ENCODE measurements at regions of chr17 and their contacts with region 1.

Region 1: GRCh38 chr17:35808962-35809854 is at the start of gene TAF15:
- DNase-seq: peak; percentile 87 to 98 (median 93)
- ATAC-seq: peak; percentile 89
- H3K4me3 ChIP-seq: peak within 1 kb of the TSS; percentile 94
- H3K4me3 Mint-ChIP-seq: peak within 1 kb of the TSS; percentile 91
- H3K27ac ChIP-seq: peak within 1 kb of the TSS; percentile 81 to 91
- H3K27ac Mint-ChIP-seq: peak within 1 kb of the TSS; percentile 91
- H3K4me1 ChIP-seq: peaks cover 39% of the 10 kb centered on the region
- H3K4me1 Mint-ChIP-seq: peaks cover 63% of the 10 kb centered on the region
- H3K27me3 ChIP-seq: no peaks in the 10 kb centered on the region
- H3K27me3 Mint-ChIP-seq: no peaks in the 10 kb centered on the region
- CTCF ChIP-seq: peak; percentile 89
- total RNA-seq, gene TAF15: 114 to 119 TPM

Region 2: DNA sequence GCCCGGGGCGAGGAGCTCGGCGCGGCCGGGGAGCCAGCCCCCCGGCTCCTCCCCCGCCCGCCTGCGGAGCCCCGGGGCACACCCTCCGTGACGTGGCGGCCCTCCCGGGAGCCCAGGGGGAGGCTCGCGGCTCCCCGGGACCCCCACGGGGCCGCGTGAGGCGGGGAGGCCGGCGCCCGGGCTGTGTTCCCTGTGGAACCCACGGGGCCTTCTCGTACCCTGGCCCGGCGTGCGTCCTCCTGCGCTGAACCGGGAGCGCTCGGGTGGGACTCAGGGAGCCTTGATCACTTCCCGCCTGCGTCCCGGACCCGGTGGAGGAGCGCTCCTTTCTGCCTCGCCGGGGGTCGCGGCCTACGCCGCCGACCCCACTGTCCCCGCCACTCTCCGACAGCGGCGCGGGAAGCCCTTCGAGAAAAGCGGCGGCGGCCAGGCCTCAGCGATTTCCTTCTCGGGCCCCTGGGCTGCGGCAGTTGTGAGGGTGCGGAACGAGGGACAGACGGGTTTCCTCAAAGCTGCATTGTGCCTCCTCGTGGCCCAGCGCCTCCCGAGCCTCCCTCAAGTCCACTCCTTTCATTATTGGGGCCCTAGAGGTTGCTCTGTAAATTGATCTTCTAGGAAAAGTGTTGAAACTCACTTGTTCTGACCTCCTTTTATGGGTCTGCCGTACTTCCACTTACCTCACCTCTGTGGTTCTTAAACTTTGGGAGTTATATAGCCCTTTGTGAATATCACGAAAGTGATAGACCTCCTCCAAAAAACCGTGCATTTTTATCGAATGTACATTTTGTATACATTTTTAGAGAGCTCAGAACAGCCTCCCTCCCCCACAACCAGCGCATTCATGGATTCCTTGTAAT is 828.3 kb before region 1 on chr17:
- CTCF ChIA-PET with region 1: no interaction called
- POLR2A ChIA-PET with region 1: interaction called, 3 read pairs
- intact Hi-C with region 1: loop called in 1 of 2 experiments (anchors 5 kb)
- DNase-seq: peak; percentile 38 to 91 (median 66)
- ATAC-seq: peak; percentile 80
- H3K4me3 ChIP-seq: peak overlapping the region; percentile 90
- H3K4me3 Mint-ChIP-seq: peak overlapping the region; percentile 94
- H3K27ac ChIP-seq: peak overlapping the region; percentile 92 to 97
- H3K27ac Mint-ChIP-seq: peak overlapping the region; percentile 88
- H3K4me1 ChIP-seq: peaks cover 26% of the 10 kb centered on the region
- H3K4me1 Mint-ChIP-seq: peaks cover 56% of the 10 kb centered on the region
- H3K27me3 ChIP-seq: no peaks in the 10 kb centered on the region
- H3K27me3 Mint-ChIP-seq: no peaks in the 10 kb centered on the region
- CTCF ChIP-seq: peak; percentile 56

Region 3: GRCh38 chr17:35578197-35578928 is 230.8 kb before region 1 on chr17 and contains the start of gene PEX12:
- CTCF ChIA-PET with region 1: no interaction called
- POLR2A ChIA-PET with region 1: interaction called, 25 read pairs
- intact Hi-C with region 1: no loop called
- DNase-seq: peak; percentile 77 to 96 (median 86)
- ATAC-seq: peak; percentile 96
- H3K4me3 ChIP-seq: peak within 1 kb of the TSS; percentile 85
- H3K4me3 Mint-ChIP-seq: peak within 1 kb of the TSS; percentile 92
- H3K27ac ChIP-seq: peak within 1 kb of the TSS; percentile 90 to 93
- H3K27ac Mint-ChIP-seq: peak within 1 kb of the TSS; percentile 97
- H3K4me1 ChIP-seq: peaks cover 21% of the 10 kb centered on the region
- H3K4me1 Mint-ChIP-seq: peaks cover 42% of the 10 kb centered on the region
- H3K27me3 ChIP-seq: no peaks in the 10 kb centered on the region
- H3K27me3 Mint-ChIP-seq: no peaks in the 10 kb centered on the region
- CTCF ChIP-seq: no peak
- total RNA-seq, gene PEX12: 3.0 to 3.2 TPM

Region 4: DNA sequence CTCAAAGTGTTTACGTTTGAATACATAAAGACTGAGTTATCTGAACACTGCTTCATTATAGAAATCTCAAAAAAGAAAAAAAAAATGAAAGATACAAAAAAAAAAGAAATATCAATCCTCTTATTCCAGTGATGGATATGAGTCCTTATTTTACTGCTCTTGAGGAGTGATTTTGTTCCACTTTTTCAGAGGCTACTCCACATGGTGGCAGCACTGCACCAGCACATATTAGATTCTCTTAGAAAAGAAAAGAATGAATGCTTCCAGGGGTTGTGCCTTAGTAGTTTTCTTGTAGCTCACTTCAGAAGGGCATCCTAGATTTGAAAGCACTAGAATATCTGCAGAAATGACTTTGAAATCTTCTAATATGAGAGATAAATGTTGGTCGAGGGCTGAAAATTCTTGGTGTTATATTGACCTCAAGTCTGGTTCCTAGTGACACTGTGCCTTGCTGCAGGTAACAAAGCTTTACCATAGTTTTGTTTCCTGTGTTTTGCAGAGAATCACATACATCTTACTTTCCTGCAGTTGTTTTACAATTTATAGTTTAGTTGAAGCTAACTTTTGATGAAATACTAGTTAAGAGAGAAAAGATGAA is 196.2 kb before region 1 on chr17:
- CTCF ChIA-PET with region 1: interaction called, 5 read pairs
- POLR2A ChIA-PET with region 1: interaction called, 6 read pairs
- intact Hi-C with region 1: loop called (anchors 5 to 10 kb)
- DNase-seq: peak in 12 of 14 experiments; percentile 10 to 58 (median 30)
- ATAC-seq: no peak
- H3K4me3 ChIP-seq: no peak overlapping the region
- H3K4me3 Mint-ChIP-seq: no peak overlapping the region
- H3K27ac ChIP-seq: no peak overlapping the region
- H3K27ac Mint-ChIP-seq: no peak overlapping the region
- H3K4me1 ChIP-seq: no peaks in the 10 kb centered on the region
- H3K4me1 Mint-ChIP-seq: peaks cover 7% of the 10 kb centered on the region
- H3K27me3 ChIP-seq: no peaks in the 10 kb centered on the region
- H3K27me3 Mint-ChIP-seq: no peaks in the 10 kb centered on the region
- CTCF ChIP-seq: peak; percentile 68

Region 5: DNA sequence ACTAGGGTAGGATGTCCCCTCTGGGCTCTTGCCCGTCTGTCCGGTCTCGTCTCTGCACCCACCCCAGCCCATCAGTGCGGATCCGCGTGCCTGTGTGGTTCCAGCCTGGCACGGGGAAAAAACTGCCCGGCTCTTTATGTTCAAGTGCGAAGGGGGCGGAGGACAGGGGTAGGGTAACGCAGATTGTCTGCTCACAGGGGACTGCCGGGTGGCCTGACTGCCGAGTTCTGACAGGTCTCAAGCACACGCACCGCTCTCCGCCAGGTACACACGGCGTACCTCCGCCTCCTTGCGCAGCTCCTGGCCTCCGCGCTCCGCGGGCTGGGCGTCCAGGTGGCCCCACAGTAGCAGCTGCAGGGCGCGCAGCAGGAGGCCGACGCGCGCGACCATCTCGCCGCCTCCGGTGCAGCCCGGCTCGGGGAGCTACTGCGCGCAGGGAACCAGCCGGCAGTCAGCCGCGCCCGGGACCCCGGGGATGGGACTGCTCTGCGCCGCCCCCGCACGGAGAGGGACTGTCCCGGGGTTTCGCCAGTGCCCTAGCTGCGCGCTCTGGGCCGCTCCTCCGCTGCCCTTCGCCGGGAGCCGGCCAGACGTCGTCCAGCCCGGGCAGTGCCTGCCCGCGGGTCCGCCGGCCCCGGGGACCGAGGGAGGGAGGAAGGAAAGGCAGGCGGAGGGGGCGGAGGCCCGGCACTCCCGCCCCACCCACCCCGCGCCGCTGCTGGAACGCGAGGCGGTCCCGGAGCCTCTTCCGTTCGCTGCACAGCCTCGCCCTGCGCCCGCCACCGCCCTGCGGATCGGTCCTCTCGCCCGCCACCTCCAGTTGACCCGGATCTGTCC is 14.0 kb before region 1 on chr17 and contains the start of gene MMP28:
- CTCF ChIA-PET with region 1: interaction called, 16 read pairs
- POLR2A ChIA-PET with region 1: interaction called, 49 read pairs
- intact Hi-C with region 1: no loop called
- DNase-seq: peak in 8 of 14 experiments; percentile 20 to 63 (median 41)
- ATAC-seq: peak; percentile 83
- H3K4me3 ChIP-seq: peak within 1 kb of the TSS; percentile 53
- H3K4me3 Mint-ChIP-seq: peak within 1 kb of the TSS; percentile 86
- H3K27ac ChIP-seq: no peak within 1 kb of the TSS
- H3K27ac Mint-ChIP-seq: no peak within 1 kb of the TSS
- H3K4me1 ChIP-seq: peaks cover 18% of the 10 kb centered on the region
- H3K4me1 Mint-ChIP-seq: peaks cover 40% of the 10 kb centered on the region
- H3K27me3 ChIP-seq: peaks cover 15 to 22% of the 10 kb centered on the region in 2 experiments
- H3K27me3 Mint-ChIP-seq: peaks cover 30% of the 10 kb centered on the region
- CTCF ChIP-seq: no peak
- total RNA-seq, gene MMP28: 6.7 to 9.9 TPM

Region 6: DNA sequence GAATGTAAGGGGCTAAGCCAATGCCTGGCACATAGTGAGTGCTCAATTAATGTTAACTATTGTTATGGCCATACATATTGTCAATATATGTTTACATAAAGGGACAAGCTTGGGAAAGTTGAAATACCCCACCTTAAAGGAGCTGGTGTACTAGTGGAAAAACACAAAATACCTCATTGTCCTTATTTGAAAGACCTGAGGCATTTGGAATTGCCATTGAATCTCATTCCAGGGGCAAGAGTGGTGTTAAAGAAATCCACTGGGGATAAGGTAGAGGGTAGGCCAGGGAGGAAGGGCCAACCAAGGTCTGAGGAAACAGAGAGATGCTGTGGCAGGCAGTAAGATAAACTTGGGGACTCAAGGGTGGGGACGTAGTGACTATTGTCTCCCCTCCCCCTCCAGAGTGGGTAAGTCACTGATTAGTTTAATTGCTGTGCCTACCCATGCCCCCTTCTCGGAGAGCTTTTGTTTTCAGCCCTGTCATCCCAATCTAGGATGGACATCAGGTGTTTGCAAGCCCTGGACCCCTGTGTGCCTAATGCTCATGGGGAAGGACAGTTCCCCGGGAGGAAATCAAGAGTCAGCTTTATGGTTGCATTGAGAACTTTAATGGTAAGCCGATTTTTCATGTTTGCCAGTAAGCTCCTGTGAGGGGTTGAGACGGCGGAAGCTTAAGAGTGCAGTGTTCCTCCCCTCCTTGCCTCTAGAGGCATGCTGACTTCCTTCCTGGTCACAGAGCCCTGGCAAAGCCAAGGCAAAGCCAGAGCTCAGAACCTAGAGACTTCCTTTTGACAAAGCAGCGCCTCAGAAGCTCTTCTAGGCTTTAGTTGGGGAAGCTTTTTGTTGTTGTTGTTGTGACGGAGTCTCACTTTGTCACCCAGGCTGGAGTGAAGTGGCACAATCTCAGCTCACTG is 62.0 kb after region 1 on chr17:
- CTCF ChIA-PET with region 1: no interaction called
- POLR2A ChIA-PET with region 1: interaction called, 11 read pairs
- intact Hi-C with region 1: no loop called
- DNase-seq: peak in 10 of 14 experiments; percentile 11 to 67 (median 32)
- ATAC-seq: peak; percentile 97
- H3K4me3 ChIP-seq: no peak overlapping the region
- H3K4me3 Mint-ChIP-seq: peak overlapping the region; percentile 9
- H3K27ac ChIP-seq: no peak overlapping the region
- H3K27ac Mint-ChIP-seq: no peak overlapping the region
- H3K4me1 ChIP-seq: peaks cover 24% of the 10 kb centered on the region
- H3K4me1 Mint-ChIP-seq: peaks cover 26% of the 10 kb centered on the region
- H3K27me3 ChIP-seq: no peaks in the 10 kb centered on the region
- H3K27me3 Mint-ChIP-seq: no peaks in the 10 kb centered on the region
- CTCF ChIP-seq: peak; percentile 22

Region 7: DNA sequence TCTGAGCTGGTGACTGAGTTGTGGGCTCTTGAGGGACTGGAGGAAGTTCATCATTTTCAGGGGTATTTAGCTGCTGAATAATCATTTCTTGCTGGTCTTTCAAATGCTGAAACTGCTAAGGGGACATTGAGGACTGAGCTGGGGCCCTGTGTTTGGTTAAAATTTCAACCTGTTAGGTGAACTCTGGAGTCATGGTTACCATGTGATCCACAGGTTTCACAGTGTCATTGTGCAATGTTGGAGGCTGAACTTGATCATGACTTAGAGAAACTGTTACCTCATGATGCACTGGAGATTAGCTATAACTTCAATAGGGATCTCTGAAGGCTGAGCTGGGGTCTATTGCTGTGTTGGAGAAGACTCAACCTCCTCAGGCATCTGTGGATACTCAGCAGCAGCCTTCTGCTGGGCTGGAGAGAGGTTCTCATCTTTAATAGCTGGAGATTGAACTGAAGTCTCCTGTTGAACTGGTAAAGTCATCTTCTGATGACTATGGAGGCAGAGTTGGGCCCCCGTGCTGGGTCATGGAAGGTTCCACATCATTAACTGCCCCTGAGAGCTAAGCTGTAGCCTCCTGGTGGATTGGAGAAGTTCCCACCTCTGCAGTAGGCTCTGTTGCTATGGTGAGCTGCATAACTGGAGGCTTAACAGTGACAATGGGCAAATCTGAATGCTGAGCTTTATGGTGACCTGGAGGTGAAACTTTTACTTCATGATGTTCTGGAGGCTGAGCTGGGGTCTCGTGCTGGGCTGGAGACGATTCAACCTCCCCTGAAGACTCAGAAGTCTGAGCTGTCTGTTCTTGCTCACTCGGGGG is 106.2 kb after region 1 on chr17:
- CTCF ChIA-PET with region 1: no interaction called
- POLR2A ChIA-PET with region 1: no interaction called
- intact Hi-C with region 1: no loop called
- DNase-seq: no peak
- ATAC-seq: no peak
- H3K4me3 ChIP-seq: no peak overlapping the region
- H3K4me3 Mint-ChIP-seq: no peak overlapping the region
- H3K27ac ChIP-seq: no peak overlapping the region
- H3K27ac Mint-ChIP-seq: no peak overlapping the region
- H3K4me1 ChIP-seq: peaks cover 19% of the 10 kb centered on the region
- H3K4me1 Mint-ChIP-seq: peaks cover 7% of the 10 kb centered on the region
- H3K27me3 ChIP-seq: no peaks in the 10 kb centered on the region
- H3K27me3 Mint-ChIP-seq: no peaks in the 10 kb centered on the region
- CTCF ChIP-seq: no peak

Region 8: GRCh38 chr17:36545465-36546417 is 736.5 kb after region 1 on chr17:
- CTCF ChIA-PET with region 1: no interaction called
- POLR2A ChIA-PET with region 1: interaction called, 10 read pairs
- intact Hi-C with region 1: no loop called
- DNase-seq: peak; percentile 92 to 99 (median 96)
- ATAC-seq: peak; percentile 80
- H3K4me3 ChIP-seq: peak overlapping the region; percentile 99
- H3K4me3 Mint-ChIP-seq: peak overlapping the region; percentile 97
- H3K27ac ChIP-seq: peak overlapping the region; percentile 72 to 99
- H3K27ac Mint-ChIP-seq: peak overlapping the region; percentile 97
- H3K4me1 ChIP-seq: peaks cover 39% of the 10 kb centered on the region
- H3K4me1 Mint-ChIP-seq: peaks cover 53% of the 10 kb centered on the region
- H3K27me3 ChIP-seq: no peaks in the 10 kb centered on the region
- H3K27me3 Mint-ChIP-seq: no peaks in the 10 kb centered on the region
- CTCF ChIP-seq: no peak